Aorta (tissue), 5 donors: ENCODE measurements at regions of chr1 and their contacts with region 1.

Region 1: GRCh38 chr1:109282952-109283747 is at the start of gene PSRC1:
- DNase-seq: peak; percentile 98
- ATAC-seq: peak; percentile 99
- H3K4me3 ChIP-seq: peak within 1 kb of the TSS; percentile 28 to 51
- H3K27ac ChIP-seq: peak within 1 kb of the TSS; percentile 86 to 92
- H3K4me1 ChIP-seq: no peaks in the 10 kb centered on the region
- H3K27me3 ChIP-seq: no peaks in the 10 kb centered on the region
- total RNA-seq, gene PSRC1: 2.2 to 4.2 TPM

Region 2: DNA sequence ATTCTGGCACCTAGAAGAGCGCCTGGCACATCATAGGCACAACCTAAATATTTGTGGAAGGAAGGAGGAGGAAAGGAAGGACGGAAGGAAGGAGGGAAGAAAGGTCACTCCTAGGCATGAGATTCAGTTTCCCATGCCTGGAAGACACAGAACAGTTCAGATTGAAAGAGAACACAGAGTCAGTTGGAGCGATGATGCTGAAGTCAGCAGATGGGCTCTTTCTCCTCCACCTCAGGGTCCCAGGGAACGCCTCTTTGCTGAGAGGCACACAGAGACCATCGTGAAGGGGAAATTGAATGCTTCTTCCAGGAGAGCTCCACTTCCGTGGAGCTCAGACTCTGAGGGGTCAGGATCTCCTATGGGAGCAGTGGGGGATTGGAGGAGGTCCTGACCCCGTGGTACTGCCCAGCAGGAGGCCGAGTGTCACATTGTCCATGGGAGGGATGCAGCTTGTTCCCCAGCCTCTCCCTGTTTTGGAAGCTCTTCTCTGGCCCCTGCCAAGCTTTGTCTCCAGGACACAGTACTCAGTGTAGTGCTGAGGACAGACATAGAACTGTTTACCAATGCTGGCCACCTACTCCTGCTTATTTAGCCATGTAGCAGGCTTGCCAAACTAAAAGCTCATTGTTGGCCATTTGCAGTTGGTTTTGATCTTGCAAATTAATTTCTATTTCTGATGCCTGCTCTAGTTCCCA is 21.2 kb after region 1 on chr1:
- intact Hi-C with region 1: loop called in 1 of 2 experiments (anchors 2 kb)
- DNase-seq: no peak
- ATAC-seq: no peak
- H3K4me3 ChIP-seq: no peak overlapping the region
- H3K27ac ChIP-seq: no peak overlapping the region
- H3K4me1 ChIP-seq: no peaks in the 10 kb centered on the region
- H3K27me3 ChIP-seq: no peaks in the 10 kb centered on the region

Region 3: GRCh38 chr1:109341944-109342930 is 59.1 kb after region 1 on chr1:
- intact Hi-C with region 1: loop called (anchors 5 to 10 kb)
- DNase-seq: no peak
- ATAC-seq: no peak
- H3K4me3 ChIP-seq: no peak overlapping the region
- H3K27ac ChIP-seq: peak overlapping the region in 1 of 2 donors; percentile 57
- H3K4me1 ChIP-seq: no peaks in the 10 kb centered on the region
- H3K27me3 ChIP-seq: no peaks in the 10 kb centered on the region